ENCODE measurements at regions of chr1 and their contacts with region 1.

Region 1: GRCh38 chr1:92994105-92994712 is 32.9 kb upstream of the DIPK1A start:
- DNase-seq: peak; percentile 89
- ATAC-seq: peak; percentile 96
- H3K4me3 ChIP-seq: no peak overlapping the region
- H3K4me3 Mint-ChIP-seq: no peak overlapping the region
- H3K27ac ChIP-seq: no peak overlapping the region
- H3K27ac Mint-ChIP-seq: peak overlapping the region; percentile 76
- H3K4me1 ChIP-seq: peaks cover 35 to 41% of the 10 kb centered on the region in 2 donors
- H3K4me1 Mint-ChIP-seq: peaks cover 40% of the 10 kb centered on the region
- H3K27me3 ChIP-seq: no peaks in the 10 kb centered on the region
- H3K27me3 Mint-ChIP-seq: no peaks in the 10 kb centered on the region
- CTCF ChIP-seq: peak; percentile 87

Region 2: GRCh38 chr1:91651661-91652071 is 1342.5 kb before region 1 on chr1:
- CTCF ChIA-PET with region 1: no interaction called
- POLR2A ChIA-PET with region 1: no interaction called
- intact Hi-C with region 1: no loop called
- DNase-seq: no peak
- ATAC-seq: no peak
- H3K4me3 ChIP-seq: no peak overlapping the region
- H3K4me3 Mint-ChIP-seq: no peak overlapping the region
- H3K27ac ChIP-seq: no peak overlapping the region
- H3K27ac Mint-ChIP-seq: no peak overlapping the region
- H3K4me1 ChIP-seq: peaks cover 5 to 6% of the 10 kb centered on the region in 2 donors
- H3K4me1 Mint-ChIP-seq: peaks cover 10% of the 10 kb centered on the region
- H3K27me3 ChIP-seq: no peaks in the 10 kb centered on the region
- H3K27me3 Mint-ChIP-seq: no peaks in the 10 kb centered on the region
- CTCF ChIP-seq: no peak

Region 3: GRCh38 chr1:92858564-92859399 is 135.4 kb before region 1 on chr1:
- CTCF ChIA-PET with region 1: interaction called, 198 read pairs
- POLR2A ChIA-PET with region 1: no interaction called
- intact Hi-C with region 1: loop called (anchors 1 kb)
- DNase-seq: peak; percentile 87
- ATAC-seq: peak; percentile 98
- H3K4me3 ChIP-seq: no peak overlapping the region
- H3K4me3 Mint-ChIP-seq: peak overlapping the region; percentile 2
- H3K27ac ChIP-seq: peak overlapping the region in 1 of 2 donors; percentile 38
- H3K27ac Mint-ChIP-seq: peak overlapping the region; percentile 0
- H3K4me1 ChIP-seq: peaks cover 0 to 4% of the 10 kb centered on the region in 2 donors
- H3K4me1 Mint-ChIP-seq: peaks cover 13% of the 10 kb centered on the region
- H3K27me3 ChIP-seq: no peaks in the 10 kb centered on the region
- H3K27me3 Mint-ChIP-seq: no peaks in the 10 kb centered on the region
- CTCF ChIP-seq: peak; percentile 99

Region 4: DNA sequence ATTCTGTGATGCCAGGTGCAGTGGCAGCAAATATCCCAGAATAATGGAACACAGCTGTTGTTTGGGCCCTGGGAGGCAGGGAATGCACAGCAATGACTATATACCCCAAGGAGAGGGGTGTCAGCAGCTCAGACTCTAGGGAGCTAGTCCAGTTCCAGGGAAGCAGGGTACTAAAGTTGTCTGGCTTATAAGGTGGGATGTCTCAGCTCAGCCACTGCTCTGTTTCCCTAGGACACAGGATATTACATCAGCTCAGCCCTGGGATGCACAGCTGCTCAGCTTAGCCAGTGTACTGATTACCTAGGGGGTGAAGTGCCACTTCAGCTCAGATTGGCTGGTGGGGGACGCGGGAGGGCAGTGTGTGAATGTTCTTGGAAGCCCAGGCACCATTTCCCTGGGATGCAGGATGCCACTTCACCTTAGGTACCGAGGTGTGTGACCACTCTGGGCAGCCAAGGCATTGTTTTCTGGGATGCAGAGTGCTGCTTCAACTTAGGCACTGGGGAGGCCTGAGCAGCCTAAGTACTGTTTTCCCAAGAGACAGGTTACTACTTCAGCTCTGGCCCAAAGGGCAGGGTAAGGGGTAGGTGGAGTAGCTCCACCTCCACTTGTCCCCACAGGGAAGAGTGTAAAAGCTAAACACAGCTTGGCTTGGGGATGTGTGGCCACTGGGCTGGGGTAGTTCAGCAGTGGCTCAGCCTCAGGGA is 92.4 kb before region 1 on chr1:
- CTCF ChIA-PET with region 1: interaction called, 21 read pairs
- POLR2A ChIA-PET with region 1: no interaction called
- intact Hi-C with region 1: no loop called
- DNase-seq: no peak
- ATAC-seq: no peak
- H3K4me3 ChIP-seq: no peak overlapping the region
- H3K4me3 Mint-ChIP-seq: no peak overlapping the region
- H3K27ac ChIP-seq: no peak overlapping the region
- H3K27ac Mint-ChIP-seq: no peak overlapping the region
- H3K4me1 ChIP-seq: peaks cover 14 to 19% of the 10 kb centered on the region in 2 donors
- H3K4me1 Mint-ChIP-seq: peaks cover 49% of the 10 kb centered on the region
- H3K27me3 ChIP-seq: no peaks in the 10 kb centered on the region
- H3K27me3 Mint-ChIP-seq: no peaks in the 10 kb centered on the region
- CTCF ChIP-seq: no peak

Region 5: GRCh38 chr1:92944901-92945747 is 49.1 kb before region 1 on chr1:
- CTCF ChIA-PET with region 1: interaction called, 28 read pairs
- POLR2A ChIA-PET with region 1: interaction called, 5 read pairs
- intact Hi-C with region 1: loop called (anchors 5 kb)
- DNase-seq: peak; percentile 51
- ATAC-seq: peak; percentile 53
- H3K4me3 ChIP-seq: peak overlapping the region in 2 of 5 experiments; percentile 5 to 50
- H3K4me3 Mint-ChIP-seq: peak overlapping the region; percentile 71
- H3K27ac ChIP-seq: peak overlapping the region; percentile 73 to 85
- H3K27ac Mint-ChIP-seq: peak overlapping the region; percentile 82
- H3K4me1 ChIP-seq: peaks cover 68 to 72% of the 10 kb centered on the region in 2 donors
- H3K4me1 Mint-ChIP-seq: peaks cover 66% of the 10 kb centered on the region
- H3K27me3 ChIP-seq: no peaks in the 10 kb centered on the region
- H3K27me3 Mint-ChIP-seq: no peaks in the 10 kb centered on the region
- CTCF ChIP-seq: no peak

Region 6: DNA sequence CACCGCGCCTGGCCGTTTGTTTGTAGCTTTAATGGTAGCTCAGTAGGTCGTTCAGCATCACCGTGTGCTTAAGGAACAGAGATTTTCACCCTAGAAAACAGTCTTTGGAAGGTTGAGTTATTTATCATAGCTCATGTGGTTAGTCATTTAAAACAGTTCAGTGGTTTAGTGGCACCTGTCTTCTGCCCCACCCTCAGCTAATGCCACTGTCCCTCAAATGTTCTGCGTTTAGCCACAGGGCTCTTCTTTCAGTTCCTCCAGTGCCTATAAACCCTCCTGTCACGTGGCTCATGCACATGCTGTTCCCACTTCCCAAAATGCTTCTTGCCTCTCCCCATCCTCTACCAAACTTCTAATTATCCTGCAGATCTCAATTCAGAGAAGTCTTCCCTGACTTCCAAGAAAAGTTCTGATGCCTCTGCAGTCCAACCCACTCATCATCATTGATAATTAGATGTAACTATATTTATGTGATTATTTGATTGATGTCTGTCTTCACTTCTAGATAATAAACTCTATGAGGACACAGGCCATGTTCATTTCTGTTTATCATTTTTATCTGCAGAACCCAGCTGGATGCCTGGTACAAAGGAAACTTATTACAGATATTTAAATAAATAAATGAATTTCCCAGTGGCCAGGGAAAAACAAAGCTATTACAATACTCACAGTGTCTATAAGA is 18.5 kb before region 1 on chr1:
- CTCF ChIA-PET with region 1: interaction called, 405 read pairs
- POLR2A ChIA-PET with region 1: interaction called, 6 read pairs
- intact Hi-C with region 1: loop called (anchors 1 kb)
- DNase-seq: peak; percentile 89
- ATAC-seq: peak; percentile 74
- H3K4me3 ChIP-seq: peak overlapping the region in 2 of 5 experiments; percentile 30 to 40
- H3K4me3 Mint-ChIP-seq: peak overlapping the region; percentile 80
- H3K27ac ChIP-seq: peak overlapping the region; percentile 88 to 90
- H3K27ac Mint-ChIP-seq: peak overlapping the region; percentile 98
- H3K4me1 ChIP-seq: peaks cover 88 to 90% of the 10 kb centered on the region in 2 donors
- H3K4me1 Mint-ChIP-seq: peaks cover 78% of the 10 kb centered on the region
- H3K27me3 ChIP-seq: no peaks in the 10 kb centered on the region
- H3K27me3 Mint-ChIP-seq: no peaks in the 10 kb centered on the region
- CTCF ChIP-seq: no peak

Region 7: GRCh38 chr1:93061895-93062792 is 67.9 kb after region 1 on chr1:
- CTCF ChIA-PET with region 1: interaction called, 43 read pairs
- POLR2A ChIA-PET with region 1: no interaction called
- intact Hi-C with region 1: no loop called
- DNase-seq: peak; percentile 68
- ATAC-seq: peak; percentile 69
- H3K4me3 ChIP-seq: no peak overlapping the region
- H3K4me3 Mint-ChIP-seq: no peak overlapping the region
- H3K27ac ChIP-seq: no peak overlapping the region
- H3K27ac Mint-ChIP-seq: no peak overlapping the region
- H3K4me1 ChIP-seq: no peaks in the 10 kb centered on the region
- H3K4me1 Mint-ChIP-seq: no peaks in the 10 kb centered on the region
- H3K27me3 ChIP-seq: peaks cover 0 to 5% (median 0%) of the 10 kb centered on the region in 4 experiments
- H3K27me3 Mint-ChIP-seq: peaks cover 24% of the 10 kb centered on the region
- CTCF ChIP-seq: peak; percentile 68

Region 8: GRCh38 chr1:93798301-93798700 is 804.1 kb after region 1 on chr1:
- CTCF ChIA-PET with region 1: no interaction called
- POLR2A ChIA-PET with region 1: no interaction called
- intact Hi-C with region 1: no loop called
- DNase-seq: no peak
- ATAC-seq: no peak
- H3K4me3 ChIP-seq: no peak overlapping the region
- H3K4me3 Mint-ChIP-seq: no peak overlapping the region
- H3K27ac ChIP-seq: no peak overlapping the region
- H3K27ac Mint-ChIP-seq: no peak overlapping the region
- H3K4me1 ChIP-seq: no peaks in the 10 kb centered on the region
- H3K4me1 Mint-ChIP-seq: no peaks in the 10 kb centered on the region
- H3K27me3 ChIP-seq: no peaks in the 10 kb centered on the region
- H3K27me3 Mint-ChIP-seq: no peaks in the 10 kb centered on the region
- CTCF ChIP-seq: no peak